Activated CD8-positive, alpha-beta T cell treated with anti-CD3 and anti-CD28 coated beads for 36 hours (primary cell): ENCODE measurements at regions of chr9 and their contacts with region 1.

Region 1: GRCh38 chr9:3224931-3225330 is 300.9 kb downstream of the RFX3 start:
- DNase-seq: no peak
- ATAC-seq: no peak
- H3K4me3 Mint-ChIP-seq: no peak overlapping the region
- H3K27ac Mint-ChIP-seq: no peak overlapping the region
- H3K4me1 Mint-ChIP-seq: no peaks in the 10 kb centered on the region
- H3K27me3 Mint-ChIP-seq: no peaks in the 10 kb centered on the region
- CTCF ChIP-seq: no peak

Region 2: DNA sequence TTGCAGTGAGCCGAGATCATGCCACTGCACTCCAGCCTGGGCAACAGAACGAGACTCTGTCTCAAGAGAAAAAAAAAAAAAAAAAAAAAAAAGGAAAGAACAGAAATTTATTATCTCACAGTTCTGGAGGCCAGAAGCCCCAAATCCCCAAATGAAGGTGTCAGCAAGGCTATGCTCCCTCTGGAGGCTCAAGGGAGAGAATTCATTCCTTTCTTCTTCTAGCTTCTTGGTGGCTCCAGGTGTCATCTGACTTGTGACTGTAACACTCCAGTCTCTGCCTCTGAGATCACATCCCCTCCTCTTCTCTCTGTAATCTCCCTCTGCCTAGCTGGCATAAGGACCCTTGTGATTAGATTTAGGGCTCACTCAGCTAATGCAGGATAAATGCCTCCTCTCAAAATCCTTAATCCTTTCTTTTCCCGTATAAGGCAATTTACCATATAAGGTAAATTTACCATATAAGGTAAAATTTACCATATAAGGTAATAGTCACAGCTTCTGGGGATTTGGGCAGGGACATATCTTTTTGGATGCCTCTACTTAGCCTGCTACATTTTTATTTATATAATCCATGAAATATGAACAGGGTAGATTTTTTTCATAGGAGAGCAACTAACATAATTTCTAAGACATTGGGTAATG is 63.1 kb before region 1 on chr9:
- CTCF ChIA-PET with region 1: no interaction called
- POLR2A ChIA-PET with region 1: no interaction called
- intact Hi-C with region 1: no loop called
- DNase-seq: no peak
- ATAC-seq: no peak
- H3K4me3 Mint-ChIP-seq: no peak overlapping the region
- H3K27ac Mint-ChIP-seq: no peak overlapping the region
- H3K4me1 Mint-ChIP-seq: no peaks in the 10 kb centered on the region
- H3K27me3 Mint-ChIP-seq: peaks cover 13% of the 10 kb centered on the region
- CTCF ChIP-seq: no peak

Region 3: GRCh38 chr9:3240656-3241268 is 15.8 kb after region 1 on chr9:
- CTCF ChIA-PET with region 1: interaction called, 10 read pairs
- POLR2A ChIA-PET with region 1: no interaction called
- intact Hi-C with region 1: no loop called
- DNase-seq: peak; percentile 85
- ATAC-seq: peak; percentile 90
- H3K4me3 Mint-ChIP-seq: no peak overlapping the region
- H3K27ac Mint-ChIP-seq: no peak overlapping the region
- H3K4me1 Mint-ChIP-seq: peaks cover 10% of the 10 kb centered on the region
- H3K27me3 Mint-ChIP-seq: no peaks in the 10 kb centered on the region
- CTCF ChIP-seq: peak; percentile 85

Region 4: DNA sequence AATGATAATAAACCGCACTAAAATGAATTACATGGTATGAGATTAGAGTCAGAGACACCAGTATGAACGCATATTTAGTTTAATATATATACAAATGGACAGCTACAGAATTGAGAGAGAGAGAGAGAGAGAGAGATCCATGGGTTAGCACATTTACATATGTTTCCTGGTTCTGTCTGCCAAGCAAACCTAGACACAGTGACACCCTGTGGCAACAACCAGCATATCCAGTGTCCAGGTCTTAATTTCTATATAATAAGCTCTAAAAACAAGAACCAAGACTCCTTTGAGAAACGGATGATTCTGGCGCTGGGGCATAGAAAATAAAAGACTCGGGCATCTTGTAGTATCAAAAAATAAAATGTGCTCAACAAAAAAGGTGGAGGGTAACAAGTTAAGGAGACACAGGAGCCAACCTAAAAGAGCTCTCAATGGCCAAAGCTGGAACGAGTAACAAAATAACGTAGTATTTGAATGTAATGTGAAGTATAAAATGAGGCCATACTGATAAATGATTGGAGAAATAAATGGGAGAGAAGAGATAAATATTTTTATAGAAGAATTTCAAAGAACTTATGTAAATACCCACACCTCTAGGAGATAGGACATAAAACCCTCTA is 216.4 kb after region 1 on chr9:
- CTCF ChIA-PET with region 1: no interaction called
- POLR2A ChIA-PET with region 1: no interaction called
- intact Hi-C with region 1: no loop called
- DNase-seq: peak; percentile 73
- ATAC-seq: peak; percentile 79
- H3K4me3 Mint-ChIP-seq: no peak overlapping the region
- H3K27ac Mint-ChIP-seq: no peak overlapping the region
- H3K4me1 Mint-ChIP-seq: peaks cover 2% of the 10 kb centered on the region
- H3K27me3 Mint-ChIP-seq: no peaks in the 10 kb centered on the region
- CTCF ChIP-seq: peak; percentile 71